Left cardiac atrium (tissue), 4 donors: ENCODE measurements at regions of chr4 and their contacts with region 1.

Region 1: GRCh38 chr4:137124278-137124932 is 407.9 kb downstream of the PCDH18 start:
- DNase-seq: no peak
- ATAC-seq: peak; percentile 95

Region 2: DNA sequence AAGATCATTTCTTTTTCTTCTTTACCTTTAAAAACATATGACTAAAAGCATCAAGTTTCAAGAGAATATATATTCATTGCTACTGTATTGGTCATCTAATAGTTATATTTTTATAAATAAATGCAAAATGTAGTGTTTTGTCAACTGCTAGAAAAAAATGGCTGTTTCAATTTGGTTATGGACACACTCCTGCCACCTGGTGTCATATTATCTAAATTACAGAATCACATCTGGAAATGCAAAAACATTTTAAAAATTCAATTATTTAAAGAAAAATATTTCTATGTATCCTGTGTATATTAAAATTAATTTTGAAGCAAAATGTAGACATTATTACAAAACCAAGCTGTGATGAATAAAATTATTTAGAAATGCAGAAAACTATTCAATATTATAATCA is 737.3 kb after region 1 on chr4:
- intact Hi-C with region 1: loop called in 1 of 2 experiments (anchors 5 kb)
- DNase-seq: no peak
- ATAC-seq: no peak

Region 3: GRCh38 chr4:138669479-138670315 is 1545.3 kb after region 1 on chr4:
- intact Hi-C with region 1: loop called in 1 of 2 experiments (anchors 10 kb)
- DNase-seq: no peak
- ATAC-seq: no peak

Region 4: DNA sequence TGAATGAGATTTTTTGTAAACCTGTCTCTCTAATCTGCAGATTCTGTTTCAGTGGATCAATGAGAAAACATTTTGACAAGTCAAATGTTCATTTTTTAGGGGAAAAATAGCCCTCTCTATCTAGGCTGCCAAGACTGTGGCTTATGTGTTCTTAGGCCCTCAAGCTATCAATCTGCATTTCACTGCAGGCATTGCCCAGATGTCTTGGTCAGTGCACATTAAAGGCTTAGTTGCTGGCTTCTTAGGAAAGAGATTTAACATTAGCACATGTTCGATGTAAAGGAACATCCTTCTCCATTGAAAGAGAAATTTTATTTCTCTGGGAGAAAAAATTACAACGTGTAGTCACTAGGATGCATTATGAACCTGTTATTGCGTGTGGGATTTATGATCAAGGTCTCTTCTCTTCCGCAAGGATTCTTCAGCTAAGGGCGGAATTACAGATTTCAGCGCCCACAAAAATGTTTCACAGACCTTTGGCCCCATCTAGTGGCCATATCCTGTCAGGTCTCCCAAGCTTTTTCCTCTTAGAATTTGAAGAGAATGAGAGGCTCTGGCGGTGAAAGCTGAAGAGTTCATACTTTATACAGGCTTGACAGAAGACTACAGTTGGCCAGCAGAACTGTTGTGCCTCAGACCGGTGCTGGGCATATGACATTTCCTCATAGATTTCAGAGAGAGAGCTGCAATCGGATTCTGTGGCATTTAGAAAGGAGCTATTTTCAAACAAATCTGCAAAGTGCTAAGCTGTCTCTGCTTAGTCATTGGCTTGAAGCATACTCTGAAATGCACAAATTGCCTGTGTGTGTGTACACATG is 1746.5 kb after region 1 on chr4:
- intact Hi-C with region 1: loop called in 1 of 2 experiments (anchors 10 kb)
- DNase-seq: peak; percentile 26
- ATAC-seq: peak; percentile 66 to 73